ENCODE measurements at regions of chr19 and their contacts with region 1.

Region 1: GRCh38 chr19:19319787-19320361 is 435 bp downstream of the SUGP1 start:
- DNase-seq: no peak
- H3K4me3 ChIP-seq: peak overlapping the region; percentile 75 to 98 (median 90)
- H3K27ac ChIP-seq: peak overlapping the region; percentile 86 to 92 (median 89)
- H3K4me1 ChIP-seq: peaks cover 43 to 56% (median 48%) of the 10 kb centered on the region in 4 donors
- H3K27me3 ChIP-seq: no peaks in the 10 kb centered on the region
- CTCF ChIP-seq: no peak
- EP300 ChIP-seq: no peak
- POLR2A ChIP-seq: no peak

Region 2: DNA sequence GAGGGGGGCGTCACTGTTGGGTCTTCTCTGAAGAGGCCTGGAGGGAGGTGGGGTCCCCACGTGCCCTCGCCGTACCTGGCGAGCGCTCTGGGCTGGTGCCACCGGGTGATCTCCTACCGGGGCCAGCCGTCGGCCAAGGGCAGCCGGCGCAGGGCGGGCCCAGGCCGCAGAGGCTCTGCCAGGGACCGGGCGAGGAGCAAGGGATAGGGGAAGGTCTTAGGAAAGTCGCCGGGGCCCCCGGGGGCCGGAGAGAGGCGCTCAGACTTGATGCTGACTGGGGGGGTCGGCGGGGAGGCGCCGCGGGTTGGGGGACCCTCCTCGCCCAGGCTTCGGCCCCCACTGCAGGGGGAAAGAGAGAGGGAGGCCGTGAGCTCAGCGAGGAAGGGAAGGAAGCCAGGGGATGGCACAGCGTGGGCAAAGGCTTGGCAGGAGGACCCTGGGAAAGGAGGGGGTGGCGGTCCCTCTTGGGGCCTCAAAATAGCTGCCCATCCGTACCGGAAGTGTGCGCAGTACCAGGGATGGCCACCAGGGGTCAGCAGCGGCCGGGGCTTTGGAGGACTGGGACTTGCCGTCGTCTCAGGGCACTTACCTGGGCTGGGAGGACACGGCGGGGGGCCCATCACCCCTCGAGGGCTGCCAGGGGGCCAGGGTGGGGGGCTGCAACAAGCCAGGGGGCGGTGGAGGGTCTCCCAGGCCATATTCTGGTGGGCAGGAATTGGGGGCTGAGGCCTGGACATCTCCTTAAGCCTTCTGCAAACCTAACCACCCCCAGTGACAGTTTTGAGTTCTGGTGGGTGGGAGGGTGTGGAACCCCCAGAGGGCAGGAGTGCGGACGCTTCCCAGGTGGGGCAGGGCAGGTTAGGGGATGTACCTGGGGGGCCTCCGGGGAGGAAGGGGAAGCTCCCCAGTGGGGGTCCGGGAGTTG is 173.9 kb before region 1 on chr19:
- intact Hi-C with region 1: no loop called
- DNase-seq: peak; percentile 95
- H3K4me3 ChIP-seq: peak overlapping the region in 3 of 4 donors; percentile 6 to 42 (median 32)
- H3K27ac ChIP-seq: no peak overlapping the region
- H3K4me1 ChIP-seq: peaks cover 4 to 11% (median 8%) of the 10 kb centered on the region in 4 donors
- H3K27me3 ChIP-seq: no peaks in the 10 kb centered on the region
- CTCF ChIP-seq: peak in 2 of 3 experiments; percentile 88 to 91
- EP300 ChIP-seq: no peak
- POLR2A ChIP-seq: no peak

Region 3: DNA sequence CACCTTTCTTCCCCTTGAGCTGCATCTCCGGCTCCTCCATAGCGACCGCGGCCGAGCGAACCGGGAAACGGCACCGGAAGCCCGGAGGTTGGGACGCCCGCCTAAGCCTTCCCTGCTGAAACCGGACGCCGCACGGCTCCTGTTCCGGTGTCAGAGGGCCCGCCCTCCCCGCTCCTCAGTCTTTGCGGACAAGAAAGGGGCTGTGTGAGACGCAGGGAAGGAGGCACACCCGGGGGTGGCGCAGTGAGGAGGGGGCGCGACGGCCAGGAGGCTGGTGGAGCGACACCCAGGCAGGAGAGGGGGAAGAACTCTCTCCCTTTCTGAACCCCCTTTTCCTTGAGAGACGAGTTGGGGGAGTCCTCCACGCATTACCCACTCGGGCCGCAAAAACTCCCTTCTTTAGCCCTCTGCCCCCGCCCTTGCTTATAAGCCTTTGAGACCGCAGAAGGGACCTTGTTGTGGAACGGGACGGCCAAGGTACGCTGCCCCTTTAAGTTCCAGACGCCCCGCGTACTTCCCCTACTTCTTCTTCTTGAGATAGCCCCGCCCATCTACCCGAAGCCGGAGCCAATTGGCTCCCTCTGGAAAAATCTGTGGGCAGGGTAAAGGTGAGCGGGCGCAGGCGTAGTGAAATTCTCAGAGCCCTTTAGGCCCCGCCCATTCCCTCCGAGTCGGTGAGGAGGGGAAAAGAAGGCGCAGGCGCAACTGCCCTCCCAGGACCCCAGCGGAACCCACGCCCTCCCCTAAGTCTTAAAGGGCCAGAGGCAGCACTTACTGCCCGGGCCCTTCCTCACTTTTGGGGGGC is 127.6 kb before region 1 on chr19 and contains the starts of genes BORCS8 and RFXANK:
- intact Hi-C with region 1: loop called (anchors 10 kb)
- DNase-seq: peak; percentile 99
- H3K4me3 ChIP-seq: peak within 1 kb of the TSS; percentile 75 to 95 (median 82)
- H3K27ac ChIP-seq: peak within 1 kb of the TSS; percentile 98 to 100 (median 98)
- H3K4me1 ChIP-seq: peaks cover 45 to 62% (median 53%) of the 10 kb centered on the region in 4 donors
- H3K27me3 ChIP-seq: no peaks in the 10 kb centered on the region
- CTCF ChIP-seq: peak in 1 of 3 experiments; percentile 22
- EP300 ChIP-seq: no peak
- POLR2A ChIP-seq: no peak
- total RNA-seq, gene BORCS8: 10.8 to 16.1 (median 12.5) TPM
- total RNA-seq, gene RFXANK: 34.8 to 49.2 (median 38.2) TPM